Heart right ventricle (tissue), 16 donors: ENCODE measurements at regions of chr1 and their contacts with region 1.

Region 1: DNA sequence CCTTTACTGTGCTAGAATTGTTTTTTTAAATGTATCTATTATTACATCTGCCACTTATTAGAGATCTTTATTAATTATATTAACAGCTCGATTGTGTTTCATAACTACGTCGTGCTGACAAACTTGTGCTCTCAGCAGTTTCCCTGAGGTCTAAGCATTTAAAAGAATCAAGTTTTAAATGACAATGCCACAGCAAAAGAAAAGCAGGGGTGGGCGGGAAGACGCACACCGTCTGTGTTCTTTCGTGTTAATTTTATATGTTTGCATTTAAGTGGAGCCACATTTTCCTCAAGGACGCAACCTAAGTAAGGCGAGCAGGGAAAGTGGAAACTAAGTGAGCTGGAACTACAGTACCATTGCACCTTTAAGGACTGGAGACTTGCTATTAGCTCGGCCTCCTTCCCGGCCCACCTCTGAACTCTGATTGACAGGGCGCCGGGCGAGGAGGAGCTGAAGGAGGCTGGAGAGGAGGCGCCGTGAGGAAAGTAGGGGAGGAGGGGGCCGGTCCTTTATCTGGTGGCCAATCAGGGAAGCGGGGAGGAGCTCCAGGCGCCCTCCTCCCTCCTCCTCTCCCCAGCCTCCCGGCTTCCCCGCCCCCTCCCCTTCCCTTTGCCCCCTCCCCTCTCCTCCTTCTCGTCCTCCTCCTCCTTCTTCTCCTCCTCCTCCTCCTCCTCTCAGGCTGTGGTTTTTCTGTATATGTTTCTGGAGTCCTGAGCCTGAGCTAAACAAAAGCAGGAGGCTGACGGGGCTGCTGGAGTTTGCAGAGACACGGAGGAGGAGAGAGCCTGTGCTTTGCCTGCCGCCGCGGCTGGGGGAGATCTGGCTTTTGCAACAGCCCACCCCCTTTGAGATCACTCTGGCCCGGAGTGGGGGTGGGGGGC is at the start of gene PBX1:
- DNase-seq: peak; percentile 96 to 98
- ATAC-seq: peak; percentile 97 to 100 (median 99)
- H3K4me3 ChIP-seq: peak within 1 kb of the TSS; percentile 55 to 79 (median 73)
- H3K27ac ChIP-seq: peak within 1 kb of the TSS; percentile 46 to 91 (median 84)
- H3K4me1 ChIP-seq: peaks cover 0 to 12% (median 8%) of the 10 kb centered on the region in 9 donors
- H3K27me3 ChIP-seq: peaks cover 0 to 15% (median 0%) of the 10 kb centered on the region in 7 donors
- CTCF ChIP-seq: no peak
- total RNA-seq, gene PBX1: 53.3 to 91.8 (median 64.4) TPM

Region 2: GRCh38 chr1:164602480-164603093 is 43.9 kb after region 1 on chr1:
- intact Hi-C with region 1: loop called in 2 of 10 experiments (anchors 5 kb)
- DNase-seq: peak; percentile 55 to 57
- ATAC-seq: peak in 7 of 8 donors; percentile 39 to 83 (median 79)
- H3K4me3 ChIP-seq: peak overlapping the region in 2 of 10 donors; percentile 9 to 14
- H3K27ac ChIP-seq: peak overlapping the region in 8 of 10 donors; percentile 3 to 69 (median 42)
- H3K4me1 ChIP-seq: peaks cover 3 to 69% (median 43%) of the 10 kb centered on the region in 9 donors
- H3K27me3 ChIP-seq: no peaks in the 10 kb centered on the region
- CTCF ChIP-seq: peak in 1 of 9 donors; percentile 10

Region 3: GRCh38 chr1:164617377-164618201 is 58.9 kb after region 1 on chr1:
- intact Hi-C with region 1: loop called in 5 of 10 experiments (anchors 5 to 10 kb)
- DNase-seq: no peak
- ATAC-seq: no peak
- H3K4me3 ChIP-seq: no peak overlapping the region
- H3K27ac ChIP-seq: peak overlapping the region in 3 of 10 donors; percentile 11 to 32 (median 11)
- H3K4me1 ChIP-seq: peaks cover under 1 to 99% (median 61%) of the 10 kb centered on the region in 9 donors
- H3K27me3 ChIP-seq: no peaks in the 10 kb centered on the region
- CTCF ChIP-seq: peak in 8 of 9 donors; percentile 13 to 60 (median 48)

Region 4: GRCh38 chr1:164651351-164651951 is 92.8 kb after region 1 on chr1:
- intact Hi-C with region 1: no loop called
- DNase-seq: no peak
- ATAC-seq: peak in 3 of 8 donors; percentile 28 to 63 (median 29)
- H3K4me3 ChIP-seq: no peak overlapping the region
- H3K27ac ChIP-seq: no peak overlapping the region
- H3K4me1 ChIP-seq: peaks cover 4 to 64% (median 26%) of the 10 kb centered on the region in 9 donors
- H3K27me3 ChIP-seq: no peaks in the 10 kb centered on the region
- CTCF ChIP-seq: no peak

Region 5: DNA sequence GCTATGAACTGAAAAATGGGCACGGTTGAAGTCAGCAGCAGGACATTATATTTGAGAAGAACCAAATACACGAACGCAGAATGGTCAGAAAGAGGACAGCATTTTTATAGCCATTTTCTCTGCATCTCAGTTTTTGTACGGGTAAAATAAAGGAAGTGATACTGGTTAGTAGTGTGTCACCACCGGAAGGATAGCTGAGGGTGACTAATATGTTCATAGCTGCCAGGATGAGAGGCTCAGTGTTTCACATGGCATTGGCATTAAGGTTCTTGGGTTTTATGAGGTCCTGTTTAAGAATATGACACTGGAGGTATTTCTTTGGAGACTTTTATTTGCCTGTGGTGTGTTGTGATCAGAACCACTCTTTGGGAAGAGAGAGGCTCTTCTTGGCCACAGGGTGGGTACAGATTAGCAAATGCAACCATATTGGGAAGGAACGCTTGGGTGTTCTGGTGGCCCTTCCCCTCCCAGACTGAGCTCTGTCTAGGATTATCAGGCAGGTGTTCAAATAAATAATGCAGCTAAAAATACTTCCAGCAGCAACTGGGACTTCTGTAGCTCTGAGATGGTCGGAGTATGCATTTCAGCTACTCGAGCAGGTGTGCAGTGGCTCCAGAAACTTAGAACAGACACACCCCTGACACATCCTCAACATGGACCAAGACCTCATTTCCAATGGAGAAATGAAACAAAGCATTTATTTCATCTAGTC is 158.4 kb after region 1 on chr1:
- intact Hi-C with region 1: loop called in 1 of 10 experiments (anchors 10 kb)
- DNase-seq: no peak
- ATAC-seq: peak in 1 of 8 donors; percentile 19
- H3K4me3 ChIP-seq: no peak overlapping the region
- H3K27ac ChIP-seq: peak overlapping the region in 1 of 10 donors; percentile 33
- H3K4me1 ChIP-seq: peaks cover 7 to 77% (median 55%) of the 10 kb centered on the region in 9 donors
- H3K27me3 ChIP-seq: peaks cover 0 to 12% (median 0%) of the 10 kb centered on the region in 7 donors
- CTCF ChIP-seq: no peak

Region 6: DNA sequence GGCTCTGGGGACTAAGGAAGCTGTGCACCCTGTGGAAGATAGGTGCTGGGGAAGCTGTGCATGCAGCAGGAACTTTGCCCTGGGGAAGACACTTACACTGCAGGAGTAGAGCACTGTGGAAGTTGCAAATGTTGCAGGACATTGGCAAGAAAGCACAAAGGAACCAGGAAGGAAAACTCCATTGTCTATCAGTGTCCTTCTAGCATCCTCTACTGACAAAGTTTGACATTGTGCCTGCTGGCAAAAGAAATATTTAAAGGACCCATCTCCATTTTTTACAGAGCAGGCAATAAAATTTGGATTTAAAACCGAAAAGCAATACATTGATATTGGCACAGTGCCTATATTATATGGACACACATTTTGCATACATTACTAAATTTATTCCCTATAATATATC is 394.4 kb after region 1 on chr1:
- intact Hi-C with region 1: loop called in 1 of 10 experiments (anchors 2 kb)
- DNase-seq: no peak
- ATAC-seq: peak in 3 of 8 donors; percentile 29 to 54 (median 49)
- H3K4me3 ChIP-seq: no peak overlapping the region
- H3K27ac ChIP-seq: peak overlapping the region in 1 of 10 donors; percentile 29
- H3K4me1 ChIP-seq: peaks cover 0 to 40% (median 20%) of the 10 kb centered on the region in 9 donors
- H3K27me3 ChIP-seq: no peaks in the 10 kb centered on the region
- CTCF ChIP-seq: peak in 6 of 9 donors; percentile 22 to 55 (median 34)

Region 7: GRCh38 chr1:165306541-165307434 is 748.1 kb after region 1 on chr1:
- intact Hi-C with region 1: no loop called
- DNase-seq: no peak
- ATAC-seq: peak in 1 of 8 donors; percentile 25
- H3K4me3 ChIP-seq: no peak overlapping the region
- H3K27ac ChIP-seq: no peak overlapping the region
- H3K4me1 ChIP-seq: no peaks in the 10 kb centered on the region
- H3K27me3 ChIP-seq: peaks cover 0 to 39% (median 8%) of the 10 kb centered on the region in 7 donors
- CTCF ChIP-seq: no peak